ENCODE measurements at regions of chr2 and their contacts with region 1.

Region 1: DNA sequence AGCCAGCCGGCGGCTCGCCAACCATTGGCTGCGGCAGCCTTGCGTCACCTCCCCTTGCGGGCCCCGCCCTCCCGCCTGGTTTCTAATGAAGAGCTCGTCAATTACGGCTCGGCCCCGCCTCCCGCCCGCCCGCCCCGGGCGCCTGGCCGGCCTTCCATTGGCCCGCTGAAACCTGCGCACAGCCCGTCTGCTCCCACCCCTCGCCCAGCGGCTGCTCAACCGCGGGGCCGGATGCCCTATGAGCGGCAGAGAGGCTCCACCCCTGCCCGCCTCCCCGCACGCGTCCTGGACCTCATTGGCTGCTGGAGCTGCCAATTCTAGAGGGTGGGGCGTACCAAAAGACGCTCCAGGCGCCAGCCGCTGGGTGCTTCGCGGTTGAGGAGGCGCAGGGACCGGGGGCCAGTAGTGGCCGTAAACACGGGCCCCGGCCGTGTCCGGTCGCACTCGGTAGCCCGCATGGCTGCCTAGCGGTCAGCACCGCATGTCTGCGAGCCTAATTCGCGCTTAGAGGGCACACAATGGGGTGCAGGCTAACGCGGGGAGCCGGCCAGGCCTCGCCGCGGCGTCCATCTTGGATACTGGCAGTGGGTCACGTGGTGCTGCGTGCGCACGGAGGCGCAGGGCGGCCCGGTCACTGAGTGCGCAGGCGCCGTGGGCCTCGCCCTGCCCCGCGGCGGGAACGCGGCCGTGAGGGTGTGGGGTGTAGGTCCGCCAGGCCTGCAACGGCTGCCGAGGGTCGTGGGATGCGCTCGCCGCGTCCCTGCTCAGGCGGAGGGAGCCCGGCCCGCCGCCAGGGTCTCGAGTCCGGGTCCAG is 454 bp upstream of the HDAC4 start:
- DNase-seq: peak; percentile 98 to 100 (median 100)
- ATAC-seq: peak; percentile 92
- H3K4me3 ChIP-seq: peak overlapping the region; percentile 100
- H3K4me3 Mint-ChIP-seq: peak overlapping the region; percentile 86 to 96 (median 92)
- H3K27ac ChIP-seq: peak overlapping the region; percentile 97
- H3K27ac Mint-ChIP-seq: peak overlapping the region; percentile 96 to 99 (median 99)
- H3K4me1 ChIP-seq: peaks cover 17 to 26% of the 10 kb centered on the region in 2 donors
- H3K4me1 Mint-ChIP-seq: peaks cover 28 to 51% (median 43%) of the 10 kb centered on the region in 7 donors
- H3K27me3 ChIP-seq: no peaks in the 10 kb centered on the region
- H3K27me3 Mint-ChIP-seq: peaks cover 0 to 16% (median 0%) of the 10 kb centered on the region in 5 donors

Region 2: GRCh38 chr2:239035361-239036078 is 365.8 kb before region 1 on chr2:
- CTCF ChIA-PET with region 1: interaction called, 3 read pairs
- POLR2A ChIA-PET with region 1: no interaction called
- intact Hi-C with region 1: loop called in 1 of 2 experiments (anchors 2 kb)
- DNase-seq: peak; percentile 30 to 79 (median 62)
- ATAC-seq: peak; percentile 85
- H3K4me3 ChIP-seq: no peak overlapping the region
- H3K4me3 Mint-ChIP-seq: no peak overlapping the region
- H3K27ac ChIP-seq: no peak overlapping the region
- H3K27ac Mint-ChIP-seq: no peak overlapping the region
- H3K4me1 ChIP-seq: no peaks in the 10 kb centered on the region
- H3K4me1 Mint-ChIP-seq: peaks cover 0 to 2% (median 0%) of the 10 kb centered on the region in 7 donors
- H3K27me3 ChIP-seq: no peaks in the 10 kb centered on the region
- H3K27me3 Mint-ChIP-seq: peaks cover 7 to 27% (median 18%) of the 10 kb centered on the region in 5 donors

Region 3: DNA sequence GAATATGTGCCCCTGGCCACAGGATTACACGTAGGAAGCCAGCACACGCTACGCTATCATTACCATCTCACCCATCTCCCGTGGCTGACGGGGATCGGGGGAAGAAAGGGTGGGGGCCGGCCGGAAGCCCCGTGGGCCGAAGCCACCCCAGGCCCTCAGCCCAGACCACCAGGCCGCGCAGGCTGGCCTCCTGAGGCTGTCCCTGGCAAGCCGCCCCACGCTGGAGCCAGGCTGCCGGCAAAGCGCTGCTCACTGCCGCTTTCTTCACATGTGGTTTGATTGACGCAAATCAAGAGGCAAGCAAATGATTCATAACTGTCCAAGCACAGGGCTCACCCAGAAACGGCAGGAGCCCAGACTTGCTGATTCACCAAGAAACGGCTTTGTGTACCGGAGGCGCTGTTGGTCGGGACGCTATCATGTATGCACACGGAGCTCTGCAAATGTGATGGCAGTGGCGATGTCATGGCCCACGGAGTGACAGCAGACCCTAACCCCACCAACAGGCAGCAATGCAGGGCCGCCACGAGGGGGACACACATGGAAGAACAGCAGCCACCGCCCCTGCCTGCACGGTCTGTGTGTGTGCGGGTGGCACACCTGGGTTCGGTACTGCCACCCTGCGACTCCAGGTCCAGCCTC is 126.1 kb before region 1 on chr2:
- CTCF ChIA-PET with region 1: interaction called, 65 read pairs
- POLR2A ChIA-PET with region 1: interaction called, 12 read pairs
- intact Hi-C with region 1: loop called (anchors 1 to 2 kb)
- DNase-seq: peak; percentile 55 to 88 (median 78)
- ATAC-seq: peak; percentile 94
- H3K4me3 ChIP-seq: peak overlapping the region; percentile 35
- H3K4me3 Mint-ChIP-seq: peak overlapping the region; percentile 72 to 88 (median 80)
- H3K27ac ChIP-seq: peak overlapping the region; percentile 19
- H3K27ac Mint-ChIP-seq: peak overlapping the region; percentile 67 to 97 (median 87)
- H3K4me1 ChIP-seq: peaks cover 17 to 32% of the 10 kb centered on the region in 2 donors
- H3K4me1 Mint-ChIP-seq: peaks cover 53 to 84% (median 78%) of the 10 kb centered on the region in 7 donors
- H3K27me3 ChIP-seq: no peaks in the 10 kb centered on the region
- H3K27me3 Mint-ChIP-seq: peaks cover 0 to 4% (median 0%) of the 10 kb centered on the region in 5 donors

Region 4: DNA sequence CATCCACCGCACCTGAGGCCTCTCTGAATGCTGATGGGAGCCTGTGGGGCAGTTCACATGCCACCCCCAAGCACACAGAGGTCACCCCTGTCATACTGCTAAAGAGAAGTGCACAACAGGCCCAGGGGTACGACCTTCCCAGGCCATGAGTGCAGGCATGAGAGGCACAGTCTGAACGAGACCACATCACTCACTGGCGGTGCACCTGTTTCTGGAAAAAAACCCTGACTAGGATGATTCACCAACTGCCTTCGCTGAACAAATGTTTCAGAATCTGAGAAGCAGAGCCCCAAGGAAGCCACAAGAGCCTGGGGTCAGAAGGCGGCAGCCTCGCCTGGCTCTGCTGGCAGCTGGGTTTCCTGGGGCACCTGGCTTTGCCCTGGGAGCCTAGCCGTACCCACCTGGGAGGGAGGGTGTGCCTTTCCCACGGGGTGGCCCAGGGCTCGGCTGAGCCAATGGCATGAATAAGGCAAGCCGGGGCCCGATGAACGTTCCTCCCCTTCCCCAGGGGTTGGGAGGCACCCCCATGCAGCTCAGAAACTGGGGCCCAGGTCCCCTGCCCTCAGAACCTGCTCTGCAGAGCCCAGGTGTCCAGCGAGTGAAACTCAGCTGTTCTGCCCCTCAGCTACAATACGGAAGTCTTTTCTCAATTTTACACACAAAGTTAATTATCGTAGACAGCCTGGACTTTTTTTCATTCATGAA is 74.3 kb before region 1 on chr2:
- CTCF ChIA-PET with region 1: interaction called, 3 read pairs
- POLR2A ChIA-PET with region 1: interaction called, 9 read pairs
- intact Hi-C with region 1: loop called in 1 of 2 experiments (anchors 1 kb)
- DNase-seq: peak in 8 of 9 donors; percentile 54 to 81 (median 72)
- ATAC-seq: peak; percentile 83
- H3K4me3 ChIP-seq: no peak overlapping the region
- H3K4me3 Mint-ChIP-seq: peak overlapping the region; percentile 55 to 79 (median 71)
- H3K27ac ChIP-seq: peak overlapping the region; percentile 68
- H3K27ac Mint-ChIP-seq: peak overlapping the region; percentile 89 to 100 (median 95)
- H3K4me1 ChIP-seq: peaks cover 20 to 65% of the 10 kb centered on the region in 2 donors
- H3K4me1 Mint-ChIP-seq: peaks cover 54 to 99% (median 89%) of the 10 kb centered on the region in 7 donors
- H3K27me3 ChIP-seq: no peaks in the 10 kb centered on the region
- H3K27me3 Mint-ChIP-seq: no peaks in the 10 kb centered on the region

Region 5: GRCh38 chr2:239420077-239420476 is 18.8 kb after region 1 on chr2:
- CTCF ChIA-PET with region 1: no interaction called
- POLR2A ChIA-PET with region 1: no interaction called
- intact Hi-C with region 1: no loop called
- DNase-seq: no peak
- ATAC-seq: no peak
- H3K4me3 ChIP-seq: no peak overlapping the region
- H3K4me3 Mint-ChIP-seq: no peak overlapping the region
- H3K27ac ChIP-seq: no peak overlapping the region
- H3K27ac Mint-ChIP-seq: no peak overlapping the region
- H3K4me1 ChIP-seq: no peaks in the 10 kb centered on the region
- H3K4me1 Mint-ChIP-seq: no peaks in the 10 kb centered on the region
- H3K27me3 ChIP-seq: no peaks in the 10 kb centered on the region
- H3K27me3 Mint-ChIP-seq: peaks cover 0 to 36% (median 6%) of the 10 kb centered on the region in 5 donors

Region 6: GRCh38 chr2:239882331-239882732 is 481.1 kb after region 1 on chr2:
- CTCF ChIA-PET with region 1: no interaction called
- POLR2A ChIA-PET with region 1: no interaction called
- intact Hi-C with region 1: loop called in 1 of 2 experiments (anchors 2 kb)
- DNase-seq: peak in 8 of 9 donors; percentile 12 to 59 (median 44)
- ATAC-seq: peak; percentile 54
- H3K4me3 ChIP-seq: no peak overlapping the region
- H3K4me3 Mint-ChIP-seq: no peak overlapping the region
- H3K27ac ChIP-seq: no peak overlapping the region
- H3K27ac Mint-ChIP-seq: peak overlapping the region in 1 of 9 donors; percentile 45
- H3K4me1 ChIP-seq: peaks cover 0 to 6% of the 10 kb centered on the region in 2 donors
- H3K4me1 Mint-ChIP-seq: peaks cover 3 to 11% (median 6%) of the 10 kb centered on the region in 7 donors
- H3K27me3 ChIP-seq: no peaks in the 10 kb centered on the region
- H3K27me3 Mint-ChIP-seq: peaks cover 4 to 19% (median 12%) of the 10 kb centered on the region in 5 donors